Activated CD4-positive, alpha-beta memory T cell treated with anti-CD3 and anti-CD28 coated beads, Interleukin-2, amount 10 ng/mL, durations not matched to agents 7 days and 5 days (primary cell): ENCODE measurements at regions of chr11 and their contacts with region 1.

Region 1: DNA sequence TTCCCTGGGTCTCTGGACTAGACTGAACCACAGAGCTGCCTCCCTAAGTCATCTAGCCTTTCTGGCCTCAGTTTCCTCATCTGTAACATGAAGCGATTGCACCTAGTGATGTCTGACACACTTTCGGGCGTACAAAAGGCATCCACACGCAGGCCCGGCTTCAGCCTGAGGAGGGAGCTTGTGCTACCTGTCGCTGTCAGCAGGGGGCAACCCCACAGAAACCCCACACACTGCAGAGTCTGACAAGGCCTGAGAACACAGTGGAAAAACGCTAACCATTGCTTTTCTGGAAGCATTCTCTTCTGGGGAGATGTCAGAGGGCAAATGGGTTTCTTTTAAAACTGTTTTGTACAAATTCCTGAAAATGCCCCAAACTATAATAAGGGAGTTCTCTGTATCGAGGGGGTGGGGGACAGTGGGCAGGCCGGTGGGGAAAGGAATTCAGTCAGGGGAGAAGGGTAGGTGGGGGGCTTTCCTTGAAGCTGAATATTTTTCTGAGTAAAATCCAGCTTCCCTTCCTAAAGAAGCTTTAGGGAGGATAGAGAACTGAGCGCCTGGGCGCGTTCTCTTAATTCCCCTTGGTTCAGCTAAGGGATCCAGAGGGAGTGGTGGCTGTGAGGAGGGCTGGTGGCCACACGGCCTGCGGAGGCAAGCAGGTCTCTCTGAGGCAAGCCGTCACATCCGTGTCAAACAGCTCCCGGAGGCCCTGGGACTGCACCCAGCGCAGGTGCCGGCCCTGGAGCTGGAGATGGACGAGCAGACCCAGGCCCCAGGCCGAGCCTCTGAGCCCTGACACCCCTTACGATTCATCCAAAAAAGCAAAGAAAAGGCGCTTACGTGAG is 533 bp downstream of the ELF5 start:
- DNase-seq: peak; percentile 55
- H3K4me3 Mint-ChIP-seq: no peak overlapping the region
- H3K27ac Mint-ChIP-seq: no peak overlapping the region
- H3K4me1 Mint-ChIP-seq: no peaks in the 10 kb centered on the region
- H3K27me3 Mint-ChIP-seq: peaks cover 9% of the 10 kb centered on the region

Region 2: DNA sequence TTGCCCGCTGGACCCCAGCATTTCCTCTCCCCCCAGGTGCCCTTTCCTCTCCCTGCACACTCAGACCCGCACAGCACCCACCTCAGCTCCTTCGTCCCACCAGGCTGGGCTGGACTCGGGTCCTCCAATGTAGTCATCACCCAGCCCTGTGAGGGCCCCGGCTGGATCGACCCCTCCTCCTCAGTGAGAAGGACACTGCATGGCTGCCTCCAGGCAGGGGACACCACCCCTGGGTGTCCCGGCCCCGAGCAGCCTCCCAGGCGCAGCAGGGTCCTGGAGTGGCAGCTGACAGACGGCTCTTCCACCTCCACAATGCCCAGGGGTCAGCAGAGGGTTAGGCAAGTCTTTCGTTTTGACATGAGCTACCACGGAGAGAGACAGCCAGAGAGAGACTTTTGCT is 11.6 kb after region 1 on chr11:
- CTCF ChIA-PET with region 1: interaction called, 10 read pairs
- POLR2A ChIA-PET with region 1: no interaction called
- DNase-seq: no peak
- H3K4me3 Mint-ChIP-seq: no peak overlapping the region
- H3K27ac Mint-ChIP-seq: no peak overlapping the region
- H3K4me1 Mint-ChIP-seq: no peaks in the 10 kb centered on the region
- H3K27me3 Mint-ChIP-seq: peaks cover 5% of the 10 kb centered on the region

Region 3: GRCh38 chr11:34745195-34745594 is 232.1 kb after region 1 on chr11:
- CTCF ChIA-PET with region 1: no interaction called
- POLR2A ChIA-PET with region 1: no interaction called
- DNase-seq: no peak
- H3K4me3 Mint-ChIP-seq: no peak overlapping the region
- H3K27ac Mint-ChIP-seq: no peak overlapping the region
- H3K4me1 Mint-ChIP-seq: no peaks in the 10 kb centered on the region
- H3K27me3 Mint-ChIP-seq: peaks cover 25% of the 10 kb centered on the region

Region 4: GRCh38 chr11:34890812-34891211 is 377.8 kb after region 1 on chr11:
- CTCF ChIA-PET with region 1: interaction called, 14 read pairs
- POLR2A ChIA-PET with region 1: no interaction called
- DNase-seq: no peak
- H3K4me3 Mint-ChIP-seq: no peak overlapping the region
- H3K27ac Mint-ChIP-seq: no peak overlapping the region
- H3K4me1 Mint-ChIP-seq: no peaks in the 10 kb centered on the region
- H3K27me3 Mint-ChIP-seq: no peaks in the 10 kb centered on the region